ENCODE measurements at regions of chr10 and their contacts with region 1.

Region 1: GRCh38 chr10:79116801-79117723 is 48.3 kb downstream of the ZMIZ1 start:
- DNase-seq: peak; percentile 75
- CTCF ChIP-seq: no peak

Region 2: GRCh38 chr10:79093658-79094411 is 23.2 kb before region 1 on chr10:
- CTCF ChIA-PET with region 1: no interaction called
- POLR2A ChIA-PET with region 1: no interaction called
- DNase-seq: no peak
- CTCF ChIP-seq: no peak

Region 3: GRCh38 chr10:79105150-79105739 is 11.8 kb before region 1 on chr10:
- CTCF ChIA-PET with region 1: interaction called, 10 read pairs
- POLR2A ChIA-PET with region 1: no interaction called
- DNase-seq: no peak
- CTCF ChIP-seq: no peak

Measured in GM10248 (cell line).